Gastrocnemius medialis (tissue), 4 donors: ENCODE measurements at regions of chr19 and their contacts with region 1.

Region 1: GRCh38 chr19:58002384-58003173 is at the start of gene ZNF606:
- DNase-seq: peak; percentile 69 to 76
- ATAC-seq: peak; percentile 96 to 97
- H3K4me3 ChIP-seq: peak within 1 kb of the TSS; percentile 78 to 93 (median 88)
- H3K27ac ChIP-seq: peak within 1 kb of the TSS; percentile 77 to 88 (median 87)
- H3K4me1 ChIP-seq: peaks cover 14 to 20% of the 10 kb centered on the region in 2 donors
- H3K27me3 ChIP-seq: no peaks in the 10 kb centered on the region
- CTCF ChIP-seq: peak in 1 of 5 experiments; percentile 10
- POLR2A ChIP-seq: peak; percentile 50 to 65
- total RNA-seq, gene ZNF606: 2.9 to 15.3 (median 6.6) TPM

Region 2: DNA sequence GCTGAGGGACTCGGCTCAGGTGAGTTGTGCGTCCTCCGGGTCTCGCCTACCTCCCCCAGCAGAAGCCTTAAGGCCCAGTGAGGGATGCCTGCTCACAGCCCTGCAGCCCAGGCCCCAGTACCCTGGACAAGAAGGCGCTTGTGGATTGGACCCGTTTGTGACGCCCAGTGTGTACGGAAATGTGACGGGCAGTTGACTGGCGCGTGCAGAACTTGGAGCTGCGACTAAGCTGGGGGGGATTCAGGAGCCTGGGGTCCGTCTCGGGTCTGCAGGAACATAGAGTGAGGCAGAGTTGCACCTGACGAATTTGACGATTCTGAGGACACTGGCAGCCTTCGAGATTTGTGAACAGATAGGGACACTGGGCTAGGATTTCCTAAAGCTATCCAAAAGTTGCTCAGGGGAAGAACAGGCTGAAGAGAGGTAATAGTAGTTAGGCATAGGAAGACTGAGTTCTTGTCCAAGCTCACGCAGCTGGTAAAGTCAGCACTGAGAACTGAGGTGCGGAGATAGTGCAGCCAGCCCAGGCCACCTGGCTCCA is 320.3 kb before region 1 on chr19:
- in situ Hi-C with region 1: no loop called
- intact Hi-C with region 1: loop called (anchors 2 kb)
- DNase-seq: no peak
- ATAC-seq: peak; percentile 22 to 27
- H3K4me3 ChIP-seq: peak overlapping the region; percentile 74 to 99 (median 88)
- H3K27ac ChIP-seq: peak overlapping the region; percentile 55 to 82 (median 68)
- H3K4me1 ChIP-seq: peaks cover 10 to 14% of the 10 kb centered on the region in 2 donors
- H3K27me3 ChIP-seq: no peaks in the 10 kb centered on the region
- CTCF ChIP-seq: no peak
- POLR2A ChIP-seq: no peak

Region 3: DNA sequence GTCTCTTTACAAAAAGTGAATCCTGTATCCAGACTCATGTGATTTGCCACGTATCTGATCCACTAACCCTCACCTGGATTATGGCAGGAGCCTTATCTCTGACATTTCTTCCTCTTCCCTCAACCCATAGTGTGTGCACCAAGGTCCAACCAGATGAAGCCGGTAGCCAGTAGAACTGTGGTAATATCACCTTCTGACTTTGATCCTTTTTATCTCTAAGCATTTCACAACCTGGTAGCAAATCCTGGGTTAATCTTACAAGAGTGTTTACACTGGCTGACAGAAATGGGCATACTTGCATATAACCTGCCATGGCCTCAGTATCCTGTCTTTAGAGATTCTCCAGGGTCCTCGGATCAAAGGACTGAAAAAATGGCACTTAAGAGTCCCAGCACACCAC is 88.0 kb before region 1 on chr19:
- in situ Hi-C with region 1: no loop called
- intact Hi-C with region 1: loop called (anchors 1 kb)
- DNase-seq: no peak
- ATAC-seq: no peak
- H3K4me3 ChIP-seq: no peak overlapping the region
- H3K27ac ChIP-seq: no peak overlapping the region
- H3K4me1 ChIP-seq: peaks cover 10 to 11% of the 10 kb centered on the region in 2 donors
- H3K27me3 ChIP-seq: no peaks in the 10 kb centered on the region
- CTCF ChIP-seq: no peak
- POLR2A ChIP-seq: no peak

Region 4: GRCh38 chr19:58021541-58022282 is 19.1 kb after region 1 on chr19:
- in situ Hi-C with region 1: no loop called
- intact Hi-C with region 1: no loop called
- DNase-seq: no peak
- ATAC-seq: no peak
- H3K4me3 ChIP-seq: no peak overlapping the region
- H3K27ac ChIP-seq: no peak overlapping the region
- H3K4me1 ChIP-seq: no peaks in the 10 kb centered on the region
- H3K27me3 ChIP-seq: no peaks in the 10 kb centered on the region
- CTCF ChIP-seq: peak in 4 of 5 experiments; percentile 34 to 56 (median 46)
- POLR2A ChIP-seq: no peak

Region 5: GRCh38 chr19:58033741-58034471 is 31.3 kb after region 1 on chr19 and contains the start of gene ZSCAN1:
- in situ Hi-C with region 1: no loop called
- intact Hi-C with region 1: no loop called
- DNase-seq: peak; percentile 8 to 14
- ATAC-seq: peak in 1 of 2 donors; percentile 47
- H3K4me3 ChIP-seq: peak within 1 kb of the TSS in 2 of 4 donors; percentile 18 to 27
- H3K27ac ChIP-seq: no peak within 1 kb of the TSS
- H3K4me1 ChIP-seq: no peaks in the 10 kb centered on the region
- H3K27me3 ChIP-seq: peaks cover 8 to 34% (median 32%) of the 10 kb centered on the region in 3 donors
- CTCF ChIP-seq: no peak
- POLR2A ChIP-seq: no peak
- total RNA-seq, gene ZSCAN1: not detected

Region 6: GRCh38 chr19:58059003-58059670 is 56.6 kb after region 1 on chr19 and contains the start of gene ZNF135:
- in situ Hi-C with region 1: no loop called
- intact Hi-C with region 1: loop called (anchors 1 kb)
- DNase-seq: peak; percentile 42 to 64
- ATAC-seq: peak; percentile 78 to 86
- H3K4me3 ChIP-seq: peak within 1 kb of the TSS; percentile 56 to 85 (median 72)
- H3K27ac ChIP-seq: peak within 1 kb of the TSS; percentile 80 to 89 (median 84)
- H3K4me1 ChIP-seq: no peaks in the 10 kb centered on the region
- H3K27me3 ChIP-seq: peaks cover 0 to 9% (median 0%) of the 10 kb centered on the region in 3 donors
- CTCF ChIP-seq: no peak
- POLR2A ChIP-seq: no peak
- total RNA-seq, gene ZNF135: 0.36 to 0.73 (median 0.53) TPM

Region 7: GRCh38 chr19:58154679-58155648 is 152.4 kb after region 1 on chr19:
- in situ Hi-C with region 1: no loop called
- intact Hi-C with region 1: loop called (anchors 5 kb)
- DNase-seq: peak; percentile 65 to 80
- ATAC-seq: peak; percentile 90 to 91
- H3K4me3 ChIP-seq: peak overlapping the region; percentile 78 to 99 (median 86)
- H3K27ac ChIP-seq: peak overlapping the region; percentile 74 to 86 (median 81)
- H3K4me1 ChIP-seq: peaks cover 0 to 9% of the 10 kb centered on the region in 2 donors
- H3K27me3 ChIP-seq: peaks cover 0 to 9% (median 0%) of the 10 kb centered on the region in 3 donors
- CTCF ChIP-seq: peak; percentile 79 to 95 (median 89)
- POLR2A ChIP-seq: peak; percentile 20 to 30